ENCODE measurements at regions of chr7 and their contacts with region 1.

Region 1: GRCh38 chr7:148932-149855 is 43.2 kb upstream of the FAM20C start:
- DNase-seq: peak; percentile 95 to 100 (median 98)
- ATAC-seq: peak; percentile 98
- H3K4me3 ChIP-seq: peak overlapping the region; percentile 54 to 57
- H3K4me3 Mint-ChIP-seq: peak overlapping the region; percentile 85
- H3K27ac ChIP-seq: peak overlapping the region; percentile 76 to 86
- H3K27ac Mint-ChIP-seq: peak overlapping the region; percentile 96
- H3K4me1 ChIP-seq: peaks cover 12% of the 10 kb centered on the region
- H3K4me1 Mint-ChIP-seq: peaks cover 18% of the 10 kb centered on the region
- H3K27me3 ChIP-seq: no peaks in the 10 kb centered on the region
- H3K27me3 Mint-ChIP-seq: no peaks in the 10 kb centered on the region
- CTCF ChIP-seq: no peak

Region 2: DNA sequence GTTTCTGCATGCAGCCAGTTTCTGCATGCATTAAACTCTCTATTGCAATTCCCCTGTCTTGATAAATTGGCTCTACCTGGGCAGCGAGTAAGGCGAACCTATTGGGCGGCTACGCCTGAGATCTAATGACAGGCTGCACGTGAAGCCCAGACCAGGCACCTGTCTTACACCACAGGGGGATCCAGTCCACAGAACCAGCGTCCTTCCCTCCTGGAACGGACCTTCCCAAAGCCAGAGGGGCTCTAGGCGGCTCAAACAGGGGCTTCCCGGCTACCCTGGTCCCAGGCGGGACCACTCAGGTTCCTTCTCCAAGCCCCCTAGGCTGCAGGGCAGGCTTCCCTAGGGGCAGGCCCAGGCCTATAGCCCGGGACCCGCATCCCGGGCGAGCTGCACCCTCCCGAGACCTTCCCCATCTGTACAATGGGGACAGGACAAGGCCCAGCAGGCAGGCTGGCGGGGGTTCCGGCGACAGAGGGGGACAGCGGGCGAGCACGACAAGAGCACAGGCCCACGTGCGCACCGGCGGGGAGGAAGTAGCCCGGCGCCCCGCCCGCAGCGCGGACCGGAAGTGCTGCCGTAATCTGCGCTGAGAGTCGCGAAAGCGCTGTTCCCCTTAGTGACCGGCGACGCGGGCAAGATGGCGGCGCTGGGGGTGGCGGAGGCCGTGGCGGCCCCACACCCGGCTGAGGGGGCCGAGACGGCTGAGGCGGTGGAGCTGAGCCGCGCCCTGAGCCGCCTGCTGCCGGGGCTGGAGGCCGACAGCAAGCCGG is 577.1 kb after region 1 on chr7 and contains the start of gene DNAAF5:
- CTCF ChIA-PET with region 1: no interaction called
- POLR2A ChIA-PET with region 1: no interaction called
- intact Hi-C with region 1: loop called in 1 of 2 experiments (anchors 5 kb)
- DNase-seq: peak; percentile 69 to 91 (median 86)
- ATAC-seq: peak; percentile 87
- H3K4me3 ChIP-seq: peak within 1 kb of the TSS; percentile 65 to 77
- H3K4me3 Mint-ChIP-seq: peak within 1 kb of the TSS; percentile 79
- H3K27ac ChIP-seq: peak within 1 kb of the TSS; percentile 65 to 67
- H3K27ac Mint-ChIP-seq: peak within 1 kb of the TSS; percentile 75
- H3K4me1 ChIP-seq: peaks cover 14% of the 10 kb centered on the region
- H3K4me1 Mint-ChIP-seq: peaks cover 17% of the 10 kb centered on the region
- H3K27me3 ChIP-seq: no peaks in the 10 kb centered on the region
- H3K27me3 Mint-ChIP-seq: no peaks in the 10 kb centered on the region
- CTCF ChIP-seq: no peak
- total RNA-seq, gene DNAAF5: 4.3 to 4.9 TPM